BJ (cell line): ENCODE measurements at regions of chr11 and their contacts with region 1.

Region 1: GRCh38 chr11:77195171-77195751 is 67.2 kb downstream of the MYO7A start:
- DNase-seq: no peak
- H3K4me3 ChIP-seq: no peak overlapping the region
- H3K27me3 ChIP-seq: no peaks in the 10 kb centered on the region; the same call in 1 of the 2 replicates
- CTCF ChIP-seq: no peak

Region 2: GRCh38 chr11:77557554-77557953 is 362.3 kb after region 1 on chr11:
- CTCF ChIA-PET with region 1: interaction called, 17 read pairs
- POLR2A ChIA-PET with region 1: no interaction called
- DNase-seq: no peak
- H3K4me3 ChIP-seq: no peak overlapping the region
- H3K27me3 ChIP-seq: no peaks in the 10 kb centered on the region
- CTCF ChIP-seq: no peak; the same call in 1 of the 2 replicates

Region 3: GRCh38 chr11:77619576-77620198 is 424.4 kb after region 1 on chr11:
- CTCF ChIA-PET with region 1: interaction called, 27 read pairs
- POLR2A ChIA-PET with region 1: no interaction called
- DNase-seq: no peak
- H3K4me3 ChIP-seq: no peak overlapping the region
- H3K27me3 ChIP-seq: no peaks in the 10 kb centered on the region
- CTCF ChIP-seq: peak; percentile 75